Panc1 (cell line): ENCODE measurements at regions of chr14 and their contacts with region 1.

Region 1: GRCh38 chr14:59664741-59665140 is 88.1 kb upstream of the CCDC175 start:
- DNase-seq: no peak
- ATAC-seq: no peak
- H3K4me3 ChIP-seq: no peak overlapping the region
- H3K27ac ChIP-seq: no peak overlapping the region
- H3K4me1 ChIP-seq: no peaks in the 10 kb centered on the region
- H3K27me3 ChIP-seq: no peaks in the 10 kb centered on the region
- CTCF ChIP-seq: no peak

Region 2: DNA sequence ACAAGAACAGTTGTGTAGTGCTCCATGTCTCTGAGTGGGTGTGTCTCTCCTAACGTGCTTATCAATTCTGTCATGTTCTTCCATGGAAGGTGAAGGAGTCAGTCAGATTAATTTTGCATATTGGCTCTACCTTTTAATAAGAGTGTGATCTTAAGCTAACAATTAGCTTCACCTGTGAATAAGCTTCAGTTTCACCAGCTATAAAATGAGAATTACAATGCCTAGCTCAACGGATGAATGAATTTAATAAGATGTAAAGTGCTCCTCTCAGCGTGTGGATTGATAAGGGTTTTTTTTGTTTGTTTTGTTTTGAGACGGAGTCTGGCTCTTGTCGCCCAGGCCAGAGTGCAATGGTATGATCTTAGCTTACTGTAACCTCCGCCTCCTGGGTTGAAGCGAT is 120.9 kb before region 1 on chr14:
- CTCF ChIA-PET with region 1: no interaction called
- POLR2A ChIA-PET with region 1: no interaction called
- in situ Hi-C with region 1: no loop called
- intact Hi-C with region 1: no loop called
- DNase-seq: no peak
- ATAC-seq: no peak
- H3K4me3 ChIP-seq: no peak overlapping the region
- H3K27ac ChIP-seq: no peak overlapping the region
- H3K4me1 ChIP-seq: no peaks in the 10 kb centered on the region
- H3K27me3 ChIP-seq: no peaks in the 10 kb centered on the region
- CTCF ChIP-seq: no peak

Region 3: DNA sequence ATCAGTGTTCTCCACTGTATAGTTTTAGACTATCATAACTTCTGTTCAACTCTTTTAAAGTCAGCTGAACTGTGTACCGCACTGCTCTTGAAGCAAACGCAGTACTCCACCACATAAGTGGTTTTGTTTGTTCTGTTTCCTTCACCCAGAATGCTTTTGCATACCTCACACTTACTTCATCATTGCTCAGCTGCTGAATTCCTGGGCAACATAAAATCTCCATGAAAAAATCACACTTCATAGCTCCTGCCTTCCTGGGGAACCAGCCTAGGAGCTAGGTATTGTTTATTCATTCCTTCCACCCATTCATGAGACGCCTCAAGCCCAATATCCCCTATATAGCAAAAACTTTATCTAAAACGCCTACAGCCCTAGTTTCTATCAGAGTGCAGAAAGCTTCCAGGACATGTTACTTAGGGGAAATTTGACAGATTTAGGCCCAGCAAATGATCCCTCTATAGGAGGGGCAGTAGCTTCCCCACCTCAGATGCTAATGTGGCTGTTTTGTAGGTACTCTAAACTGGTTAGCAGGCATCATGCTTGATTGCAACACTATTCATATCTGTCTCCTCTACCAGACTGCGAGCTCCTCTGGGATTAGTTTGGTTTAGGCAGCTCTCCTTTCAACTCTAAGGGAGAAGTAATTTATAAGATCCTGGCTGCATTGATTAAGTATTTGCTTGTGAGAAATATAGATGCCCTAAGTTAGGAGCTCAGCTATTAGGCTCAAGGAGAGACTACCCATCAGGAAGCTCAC is 299.7 kb after region 1 on chr14:
- CTCF ChIA-PET with region 1: no interaction called
- POLR2A ChIA-PET with region 1: interaction called, 21 read pairs
- in situ Hi-C with region 1: no loop called
- intact Hi-C with region 1: no loop called
- DNase-seq: no peak
- ATAC-seq: no peak
- H3K4me3 ChIP-seq: no peak overlapping the region
- H3K27ac ChIP-seq: no peak overlapping the region
- H3K4me1 ChIP-seq: no peaks in the 10 kb centered on the region
- H3K27me3 ChIP-seq: no peaks in the 10 kb centered on the region
- CTCF ChIP-seq: no peak